PC-9 (cell line): ENCODE measurements at regions of chr2 and their contacts with region 1.

Region 1: DNA sequence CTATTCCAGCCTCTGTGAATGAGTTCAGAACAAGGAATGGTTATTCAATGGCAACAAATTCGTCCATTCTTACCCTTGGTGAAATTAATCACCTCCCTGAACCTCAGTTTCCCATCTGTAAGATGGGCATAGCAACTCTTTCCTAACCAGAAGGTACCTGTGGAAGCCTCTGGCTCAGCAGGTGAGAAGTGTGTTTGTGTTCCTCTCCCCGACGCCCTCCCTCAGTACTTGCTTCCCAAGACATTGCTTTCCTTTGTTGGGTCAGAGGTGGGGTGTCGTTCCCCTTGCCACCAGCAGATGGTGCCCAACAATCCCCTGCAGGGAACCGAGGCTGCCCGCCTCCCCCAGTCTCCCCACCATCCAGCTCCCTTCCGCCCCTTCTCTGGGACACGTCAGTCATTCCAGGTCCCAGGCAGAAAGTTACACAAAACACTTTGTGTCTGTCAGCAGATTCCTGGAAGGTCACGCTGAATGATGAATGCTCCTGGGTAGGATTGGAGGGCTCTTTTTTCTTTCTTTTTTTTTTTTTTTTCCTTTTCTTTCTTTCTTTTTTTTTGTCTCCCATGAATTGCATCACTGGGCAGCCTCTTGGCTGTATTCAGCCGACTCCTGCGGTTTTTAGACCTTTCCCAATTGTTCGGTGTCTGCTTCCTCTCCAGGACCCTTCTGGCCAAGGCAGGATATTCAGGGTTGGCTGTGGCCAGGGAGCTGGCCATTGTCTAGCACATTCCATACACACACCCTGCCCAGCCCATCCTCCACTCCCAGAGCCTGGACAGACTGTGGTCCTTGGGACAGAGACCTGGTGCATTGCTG is 117.3 kb downstream of the LPIN1 start:
- DNase-seq: peak; percentile 84 to 91
- H3K4me3 ChIP-seq: no peak overlapping the region
- H3K27ac ChIP-seq: peak overlapping the region; percentile 36
- H3K4me1 ChIP-seq: peaks cover 20% of the 10 kb centered on the region
- H3K27me3 ChIP-seq: no peaks in the 10 kb centered on the region
- CTCF ChIP-seq: peak; percentile 99

Region 2: GRCh38 chr2:11663427-11663826 is 200.3 kb before region 1 on chr2:
- CTCF ChIA-PET with region 1: no interaction called
- POLR2A ChIA-PET with region 1: no interaction called
- intact Hi-C with region 1: no loop called
- DNase-seq: peak in 1 of 2 experiments; percentile 95
- H3K4me3 ChIP-seq: no peak overlapping the region
- H3K27ac ChIP-seq: no peak overlapping the region
- H3K4me1 ChIP-seq: peaks cover 55% of the 10 kb centered on the region
- H3K27me3 ChIP-seq: peaks cover 29% of the 10 kb centered on the region
- CTCF ChIP-seq: no peak

Region 3: DNA sequence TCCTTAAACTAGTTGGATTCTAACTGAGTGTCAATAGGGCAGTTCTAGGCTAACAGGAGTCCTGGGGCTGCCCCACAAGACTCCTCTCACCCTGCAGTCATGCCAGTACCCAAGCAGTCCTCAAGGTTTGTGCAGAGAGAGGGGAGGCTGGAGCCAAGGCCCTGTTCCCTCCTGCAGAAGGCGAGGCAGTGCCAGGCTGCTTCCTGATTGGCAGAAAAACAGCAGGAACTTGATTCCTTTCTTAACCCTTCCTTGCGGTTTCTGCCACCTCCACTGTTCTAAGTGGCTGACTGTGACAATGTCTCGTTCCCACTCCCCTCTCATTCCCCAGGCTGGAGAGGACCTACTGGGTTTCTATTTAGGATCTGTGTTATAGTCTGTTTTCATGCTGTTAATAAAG is 42.0 kb before region 1 on chr2:
- CTCF ChIA-PET with region 1: no interaction called
- POLR2A ChIA-PET with region 1: interaction called, 14 read pairs
- intact Hi-C with region 1: no loop called
- DNase-seq: no peak
- H3K4me3 ChIP-seq: no peak overlapping the region
- H3K27ac ChIP-seq: no peak overlapping the region
- H3K4me1 ChIP-seq: no peaks in the 10 kb centered on the region
- H3K27me3 ChIP-seq: no peaks in the 10 kb centered on the region
- CTCF ChIP-seq: no peak

Region 4: GRCh38 chr2:11842336-11842735 is 21.4 kb before region 1 on chr2:
- CTCF ChIA-PET with region 1: interaction called, 12 read pairs
- POLR2A ChIA-PET with region 1: no interaction called
- intact Hi-C with region 1: no loop called
- DNase-seq: no peak
- H3K4me3 ChIP-seq: no peak overlapping the region
- H3K27ac ChIP-seq: no peak overlapping the region
- H3K4me1 ChIP-seq: no peaks in the 10 kb centered on the region
- H3K27me3 ChIP-seq: no peaks in the 10 kb centered on the region
- CTCF ChIP-seq: no peak

Region 5: DNA sequence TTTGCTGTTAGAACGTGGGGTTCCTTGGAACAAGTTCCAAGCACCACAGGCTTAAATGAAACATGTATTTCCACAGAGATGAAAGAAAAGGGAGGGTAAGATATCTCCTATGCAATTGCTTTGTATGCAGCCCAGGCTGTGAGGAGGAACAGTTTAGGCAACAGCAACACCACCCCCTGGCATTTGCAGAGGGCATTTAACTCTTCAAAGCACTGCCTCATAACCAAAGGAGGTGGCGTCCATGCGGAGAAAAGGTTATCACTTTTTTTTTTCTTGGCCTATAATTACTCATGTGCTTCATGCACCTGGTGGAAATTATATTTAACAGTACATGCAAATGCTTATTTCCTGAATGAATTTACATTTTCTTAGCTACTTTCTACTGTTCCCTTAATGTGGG is 168.7 kb after region 1 on chr2:
- CTCF ChIA-PET with region 1: no interaction called
- POLR2A ChIA-PET with region 1: no interaction called
- intact Hi-C with region 1: loop called (anchors 10 kb)
- DNase-seq: no peak
- H3K4me3 ChIP-seq: no peak overlapping the region
- H3K27ac ChIP-seq: no peak overlapping the region
- H3K4me1 ChIP-seq: peaks cover 24% of the 10 kb centered on the region
- H3K27me3 ChIP-seq: no peaks in the 10 kb centered on the region
- CTCF ChIP-seq: no peak

Region 6: DNA sequence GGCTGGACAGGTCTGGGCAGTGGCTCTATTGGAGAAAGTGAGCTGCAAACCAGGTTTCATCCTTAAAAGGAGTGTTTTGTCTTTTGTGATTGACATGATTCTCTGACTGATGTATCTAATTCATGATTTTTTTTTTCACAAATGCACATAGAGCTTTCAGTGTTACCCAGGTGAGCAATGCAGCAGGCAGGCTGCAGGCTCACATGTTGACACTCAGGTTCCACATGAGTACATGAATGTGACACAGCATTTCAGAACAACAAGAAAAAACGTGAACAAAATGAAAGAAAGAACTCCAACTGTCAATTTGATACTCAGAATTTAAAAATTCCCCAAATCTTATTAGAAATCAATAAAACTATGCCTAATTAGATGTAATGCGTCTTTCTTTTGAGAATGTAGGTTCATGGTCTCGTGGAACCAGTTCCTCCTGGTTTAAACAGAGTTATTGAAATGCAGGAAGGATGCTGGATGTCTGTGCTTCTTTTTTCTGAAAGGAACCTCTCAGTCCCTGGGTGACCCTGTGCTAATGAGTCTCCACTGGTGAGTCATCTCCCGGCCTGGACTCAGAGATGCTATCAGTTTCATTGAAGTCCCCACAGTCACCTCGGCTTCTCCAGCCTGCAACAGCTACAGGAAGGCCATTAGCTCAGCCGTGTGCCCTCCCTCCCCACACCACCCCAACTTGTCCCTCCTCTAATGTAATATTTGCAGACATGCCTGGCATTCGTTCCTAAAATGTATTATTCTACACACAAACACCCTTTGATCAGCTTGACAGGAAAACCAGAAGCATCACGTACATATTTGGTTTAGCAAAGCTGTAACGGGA is 313.1 kb after region 1 on chr2:
- CTCF ChIA-PET with region 1: interaction called, 3 read pairs
- POLR2A ChIA-PET with region 1: no interaction called
- intact Hi-C with region 1: loop called (anchors 5 kb)
- DNase-seq: peak; percentile 78 to 95
- H3K4me3 ChIP-seq: no peak overlapping the region
- H3K27ac ChIP-seq: peak overlapping the region; percentile 50
- H3K4me1 ChIP-seq: peaks cover 30% of the 10 kb centered on the region
- H3K27me3 ChIP-seq: no peaks in the 10 kb centered on the region
- CTCF ChIP-seq: no peak

Region 7: DNA sequence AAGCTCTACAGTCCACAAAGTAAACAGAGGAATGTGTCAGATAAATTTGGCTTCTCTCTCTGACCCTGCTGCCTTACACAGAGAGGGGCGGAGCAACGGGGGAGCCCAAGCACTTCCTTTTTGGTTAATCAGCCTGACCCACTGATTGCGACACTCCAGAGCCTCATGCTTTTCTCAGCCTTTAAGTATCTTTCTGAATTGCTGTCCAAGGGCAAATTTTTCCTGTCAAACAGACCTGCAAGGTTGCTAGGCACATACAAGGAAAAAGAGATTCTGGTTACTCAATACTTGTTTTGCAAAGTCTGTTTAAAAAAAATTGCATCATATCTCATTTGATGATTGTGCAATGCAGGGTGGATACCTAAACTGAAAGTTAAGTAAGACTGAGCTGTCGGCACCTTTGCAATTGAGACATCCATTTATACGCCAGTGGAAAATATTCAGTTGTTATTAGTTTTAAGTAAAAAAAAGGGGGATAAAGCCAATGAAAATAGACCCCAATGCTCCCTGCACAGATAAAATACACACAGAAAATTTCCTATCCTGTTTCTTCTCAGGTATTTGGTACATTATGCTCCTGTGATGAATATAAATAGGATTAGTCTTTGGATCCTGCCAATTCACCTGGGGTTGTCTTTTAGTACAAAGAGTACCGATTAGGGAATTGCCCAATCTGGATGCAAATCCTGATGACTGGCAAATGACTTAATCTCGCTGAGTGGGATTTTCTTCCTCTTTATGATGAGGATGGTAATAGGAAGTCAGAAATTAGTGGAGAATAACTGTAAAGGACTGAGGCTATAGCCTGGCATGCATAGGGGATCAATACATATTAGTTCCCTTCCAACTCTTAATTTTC is 592.8 kb after region 1 on chr2:
- CTCF ChIA-PET with region 1: no interaction called
- POLR2A ChIA-PET with region 1: no interaction called
- intact Hi-C with region 1: loop called (anchors 5 kb)
- DNase-seq: peak; percentile 81 to 100
- H3K4me3 ChIP-seq: peak overlapping the region; percentile 47; the same call in 1 of the 2 replicates
- H3K27ac ChIP-seq: peak overlapping the region; percentile 88
- H3K4me1 ChIP-seq: peaks cover 38% of the 10 kb centered on the region
- H3K27me3 ChIP-seq: no peaks in the 10 kb centered on the region
- CTCF ChIP-seq: no peak

Region 8: DNA sequence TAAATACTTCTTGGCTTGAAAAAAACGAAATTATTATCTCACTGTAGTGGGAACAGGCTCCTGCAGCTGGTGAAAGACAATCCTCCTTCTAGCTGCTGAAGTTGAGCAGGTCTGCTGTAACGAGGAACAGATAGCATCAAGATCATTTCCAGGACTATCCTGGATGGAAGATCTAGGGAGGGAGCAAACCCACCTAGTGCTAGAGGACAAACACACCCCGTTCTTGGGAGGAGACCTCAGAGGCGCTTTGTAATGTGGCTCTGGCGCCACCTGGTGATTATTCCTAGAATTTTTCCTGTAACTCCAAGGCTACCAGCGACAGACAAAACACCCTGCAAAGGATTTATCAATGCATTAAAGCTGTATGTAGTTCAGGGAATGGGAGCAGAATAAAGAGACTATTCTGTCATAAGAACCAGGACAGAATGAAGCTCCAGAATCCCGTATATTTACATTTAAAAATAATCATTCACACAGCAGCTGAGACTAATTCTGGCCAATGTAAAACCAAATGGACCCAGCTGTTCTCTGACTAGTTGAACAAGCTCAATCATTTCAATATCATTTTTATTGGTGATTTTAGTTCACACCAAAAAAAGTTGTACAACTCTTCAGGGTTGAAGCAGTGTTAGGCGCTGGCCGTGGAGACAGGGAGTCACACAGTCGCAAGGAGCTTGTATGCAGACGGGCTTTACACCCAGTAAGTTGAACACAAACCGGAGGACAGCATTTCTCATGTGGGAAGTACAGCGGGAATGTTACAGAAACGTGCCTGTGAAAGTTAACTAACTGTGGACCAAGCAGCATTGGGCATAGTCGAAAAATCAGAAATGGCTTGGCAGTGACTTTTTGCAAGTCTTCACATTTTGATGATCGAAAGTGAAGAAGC is 1143.4 kb after region 1 on chr2:
- CTCF ChIA-PET with region 1: no interaction called
- POLR2A ChIA-PET with region 1: no interaction called
- intact Hi-C with region 1: loop called (anchors 1 kb)
- DNase-seq: peak; percentile 56 to 61
- H3K4me3 ChIP-seq: no peak overlapping the region
- H3K27ac ChIP-seq: no peak overlapping the region
- H3K4me1 ChIP-seq: peaks cover 9% of the 10 kb centered on the region; the same call in 1 of the 2 replicates
- H3K27me3 ChIP-seq: no peaks in the 10 kb centered on the region
- CTCF ChIP-seq: peak; percentile 98